ENCODE measurements at regions of chr7 and their contacts with region 1.

Region 1: GRCh38 chr7:17095001-17095574 is 203.4 kb upstream of the AHR start:
- DNase-seq: no peak
- ATAC-seq: no peak
- H3K4me3 ChIP-seq: no peak overlapping the region
- H3K27ac ChIP-seq: no peak overlapping the region
- H3K4me1 ChIP-seq: peaks cover 23% of the 10 kb centered on the region
- H3K27me3 ChIP-seq: no peaks in the 10 kb centered on the region
- CTCF ChIP-seq: no peak
- EP300 ChIP-seq: no peak
- POLR2A ChIP-seq: no peak
- RAD21 ChIP-seq: no peak

Region 2: GRCh38 chr7:16528520-16528919 is 566.6 kb before region 1 on chr7:
- CTCF ChIA-PET with region 1: no interaction called
- POLR2A ChIA-PET with region 1: no interaction called
- in situ Hi-C with region 1: no loop called
- intact Hi-C with region 1: loop called (anchors 5 kb)
- DNase-seq: no peak
- ATAC-seq: no peak
- H3K4me3 ChIP-seq: no peak overlapping the region
- H3K27ac ChIP-seq: no peak overlapping the region
- H3K4me1 ChIP-seq: no peaks in the 10 kb centered on the region
- H3K27me3 ChIP-seq: no peaks in the 10 kb centered on the region
- CTCF ChIP-seq: no peak
- EP300 ChIP-seq: no peak
- POLR2A ChIP-seq: no peak
- RAD21 ChIP-seq: no peak

Region 3: GRCh38 chr7:16982640-16983350 is 112.3 kb before region 1 on chr7:
- CTCF ChIA-PET with region 1: no interaction called
- POLR2A ChIA-PET with region 1: no interaction called
- in situ Hi-C with region 1: no loop called
- intact Hi-C with region 1: loop called (anchors 2 kb)
- DNase-seq: peak; percentile 58
- ATAC-seq: no peak
- H3K4me3 ChIP-seq: no peak overlapping the region
- H3K27ac ChIP-seq: no peak overlapping the region
- H3K4me1 ChIP-seq: peaks cover 54% of the 10 kb centered on the region
- H3K27me3 ChIP-seq: no peaks in the 10 kb centered on the region
- CTCF ChIP-seq: peak; percentile 78
- EP300 ChIP-seq: no peak
- POLR2A ChIP-seq: no peak
- RAD21 ChIP-seq: peak; percentile 75

Region 4: DNA sequence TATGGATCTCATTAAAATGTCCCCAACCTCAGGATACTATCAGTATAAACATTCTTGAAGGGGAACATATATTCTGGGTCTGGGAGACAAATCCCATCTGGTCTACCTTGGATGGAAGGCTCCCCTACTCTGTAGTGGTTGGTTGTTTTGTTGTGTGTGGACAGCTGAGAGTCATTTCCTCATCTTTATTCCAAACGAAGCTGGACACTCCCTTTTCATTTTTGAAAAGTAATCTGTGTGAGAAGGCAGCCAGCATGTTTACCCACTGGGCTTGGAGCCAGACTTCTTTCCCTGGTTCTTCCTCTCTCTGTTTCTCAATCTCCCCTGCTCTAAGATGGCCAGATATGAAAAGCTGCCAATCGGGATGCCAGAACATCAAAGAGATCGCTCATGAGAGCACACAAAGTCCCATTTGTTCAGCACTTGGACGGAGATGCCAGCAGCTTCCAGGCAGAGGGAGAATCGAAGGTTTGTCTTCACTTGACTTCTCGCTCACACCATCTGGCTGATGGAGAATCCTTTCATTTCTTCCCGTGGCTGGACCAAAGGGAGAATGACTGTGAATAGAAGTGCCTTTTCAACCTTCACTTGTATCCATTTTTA is 105.2 kb before region 1 on chr7:
- CTCF ChIA-PET with region 1: no interaction called
- POLR2A ChIA-PET with region 1: interaction called, 7 read pairs
- in situ Hi-C with region 1: no loop called
- intact Hi-C with region 1: loop called (anchors 1 kb)
- DNase-seq: peak; percentile 100
- ATAC-seq: peak; percentile 96
- H3K4me3 ChIP-seq: peak overlapping the region; percentile 15 to 51 (median 36); a peak in 5 of 6 replicates
- H3K27ac ChIP-seq: peak overlapping the region; percentile 76
- H3K4me1 ChIP-seq: peaks cover 81% of the 10 kb centered on the region
- H3K27me3 ChIP-seq: no peaks in the 10 kb centered on the region
- CTCF ChIP-seq: no peak
- EP300 ChIP-seq: peak; percentile 49 to 98; a peak in 2 of 4 replicates
- POLR2A ChIP-seq: peak in 1 of 2 experiments; percentile 41; a peak in 1 of 4 replicates
- RAD21 ChIP-seq: no peak; the same call in none of the 2 replicates

Region 5: GRCh38 chr7:17130281-17131059 is 35.4 kb after region 1 on chr7:
- CTCF ChIA-PET with region 1: no interaction called
- POLR2A ChIA-PET with region 1: interaction called, 25 read pairs
- in situ Hi-C with region 1: no loop called
- intact Hi-C with region 1: loop called (anchors 5 kb)
- DNase-seq: peak; percentile 98
- ATAC-seq: peak; percentile 96
- H3K4me3 ChIP-seq: peak overlapping the region in 2 of 3 experiments; percentile 20 to 23; a peak in 2 of 6 replicates
- H3K27ac ChIP-seq: peak overlapping the region; percentile 86
- H3K4me1 ChIP-seq: peaks cover 91% of the 10 kb centered on the region
- H3K27me3 ChIP-seq: no peaks in the 10 kb centered on the region
- CTCF ChIP-seq: no peak
- EP300 ChIP-seq: peak; percentile 80 to 98
- POLR2A ChIP-seq: no peak
- RAD21 ChIP-seq: no peak

Region 6: GRCh38 chr7:17185690-17186070 is 90.6 kb after region 1 on chr7:
- CTCF ChIA-PET with region 1: no interaction called
- POLR2A ChIA-PET with region 1: interaction called, 4 read pairs
- in situ Hi-C with region 1: no loop called
- intact Hi-C with region 1: loop called (anchors 2 kb)
- DNase-seq: no peak
- ATAC-seq: no peak
- H3K4me3 ChIP-seq: no peak overlapping the region
- H3K27ac ChIP-seq: peak overlapping the region; percentile 83
- H3K4me1 ChIP-seq: peaks cover 43% of the 10 kb centered on the region
- H3K27me3 ChIP-seq: no peaks in the 10 kb centered on the region
- CTCF ChIP-seq: no peak
- EP300 ChIP-seq: no peak
- POLR2A ChIP-seq: no peak
- RAD21 ChIP-seq: no peak

Region 7: DNA sequence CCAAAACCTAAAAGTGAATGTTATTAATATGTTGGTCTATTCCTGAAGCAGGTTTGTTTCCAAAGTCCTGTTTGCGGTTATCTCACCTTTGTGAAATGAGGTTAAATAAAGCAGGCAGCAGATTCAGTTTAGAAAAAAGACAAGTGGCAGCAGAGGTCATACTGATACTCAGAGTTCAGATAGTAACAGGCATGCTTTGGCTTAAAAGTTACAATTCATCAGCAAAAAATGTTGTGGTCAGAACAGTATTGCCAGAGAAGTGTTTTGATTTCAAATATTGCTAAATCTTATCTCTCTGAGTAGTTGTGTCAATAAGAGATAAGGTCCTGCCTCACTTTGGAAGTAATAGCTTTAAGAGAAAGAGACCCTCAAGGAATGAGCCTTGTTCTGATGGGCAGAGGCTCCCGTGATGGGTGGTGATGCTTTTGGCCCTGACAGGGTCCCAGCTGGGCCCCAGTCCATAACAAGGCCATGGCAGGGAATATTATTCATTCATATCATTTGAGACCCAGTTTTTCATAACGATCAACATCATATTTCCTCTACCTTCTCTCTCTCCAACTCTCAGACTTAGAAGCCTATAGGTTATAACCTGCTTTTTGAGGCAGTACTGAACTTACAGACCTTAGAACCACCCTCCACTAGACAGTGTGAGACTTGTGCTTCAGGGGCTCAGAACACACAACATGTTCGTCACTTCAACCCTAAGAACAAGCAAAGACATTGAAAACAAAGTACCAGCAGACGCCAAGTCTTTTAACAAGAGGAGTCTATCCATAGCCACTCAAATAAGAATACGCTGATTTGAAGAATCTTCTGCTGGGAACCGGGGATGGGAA is 144.8 kb after region 1 on chr7:
- CTCF ChIA-PET with region 1: no interaction called
- POLR2A ChIA-PET with region 1: no interaction called
- in situ Hi-C with region 1: no loop called
- intact Hi-C with region 1: loop called (anchors 1 kb)
- DNase-seq: peak; percentile 91
- ATAC-seq: peak; percentile 95
- H3K4me3 ChIP-seq: no peak overlapping the region
- H3K27ac ChIP-seq: no peak overlapping the region
- H3K4me1 ChIP-seq: peaks cover 18% of the 10 kb centered on the region
- H3K27me3 ChIP-seq: peaks cover 0 to 8% of the 10 kb centered on the region in 2 experiments; a peak in 3 of 5 replicates
- CTCF ChIP-seq: no peak
- EP300 ChIP-seq: peak in 1 of 2 experiments; percentile 89; a peak in 2 of 4 replicates
- POLR2A ChIP-seq: no peak
- RAD21 ChIP-seq: no peak

Measured in HepG2 (cell line).